Cardiac septum (tissue), 1 donor: ENCODE measurements at regions of chr22 and their contacts with region 1.

Region 1: DNA sequence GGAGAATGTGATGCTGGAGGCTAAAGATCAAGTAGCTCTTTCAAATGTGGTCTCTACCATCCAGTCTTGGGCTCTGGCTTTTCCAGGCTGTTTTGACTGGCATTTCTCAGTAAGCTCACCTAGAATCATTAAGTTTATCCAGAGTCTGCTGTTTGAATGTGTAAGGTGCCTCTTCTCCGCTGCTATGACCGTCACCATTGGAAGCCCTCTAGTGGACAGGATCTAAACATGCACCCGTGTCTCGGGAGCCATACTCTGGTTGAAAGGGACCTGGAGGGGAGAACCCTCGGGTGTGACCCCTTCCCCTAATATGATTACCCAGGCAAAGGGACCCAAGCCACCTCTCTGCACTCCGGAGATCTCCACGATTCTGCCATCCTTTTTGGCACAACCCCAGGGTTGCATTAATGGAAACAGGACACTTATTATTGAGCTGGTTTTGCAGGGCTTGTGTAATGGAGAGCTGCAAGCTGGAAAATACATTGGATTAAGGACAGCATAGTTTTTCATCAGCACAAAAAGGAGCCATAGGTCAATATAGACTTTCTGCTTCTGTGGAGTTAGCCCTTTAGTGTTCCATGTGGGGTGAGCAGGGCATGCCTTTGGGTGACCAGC is 191.0 kb upstream of the LARGE1 start:
- DNase-seq: no peak

Region 2: DNA sequence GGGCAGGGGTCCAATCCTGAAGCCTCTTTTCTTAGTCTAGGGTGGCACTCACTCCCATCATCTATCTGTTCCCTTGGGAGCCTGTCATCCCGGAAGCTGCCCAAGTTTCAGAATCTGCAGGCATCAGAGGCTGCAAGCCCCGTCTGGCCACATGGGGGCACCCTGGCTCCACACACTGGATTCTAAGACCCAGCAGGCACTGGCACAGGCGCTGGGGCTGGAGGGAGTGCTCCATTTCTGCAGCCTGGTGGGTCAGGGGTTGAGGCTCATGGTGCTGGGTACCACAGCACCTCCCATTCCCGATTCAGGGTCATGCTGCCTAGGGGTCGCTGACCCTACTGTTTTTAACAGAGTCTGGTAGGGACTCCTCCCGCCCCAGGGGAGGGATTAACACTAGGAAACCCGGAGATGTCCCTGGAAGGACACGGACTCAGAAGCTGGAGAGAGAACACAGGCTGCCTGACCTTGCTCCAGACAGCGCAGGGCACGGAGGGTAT is 809.2 kb before region 1 on chr22:
- intact Hi-C with region 1: loop called (anchors 5 kb)
- DNase-seq: peak; percentile 88

Region 3: GRCh38 chr22:33710326-33710725 is 401.0 kb before region 1 on chr22:
- intact Hi-C with region 1: no loop called
- DNase-seq: no peak

Region 4: DNA sequence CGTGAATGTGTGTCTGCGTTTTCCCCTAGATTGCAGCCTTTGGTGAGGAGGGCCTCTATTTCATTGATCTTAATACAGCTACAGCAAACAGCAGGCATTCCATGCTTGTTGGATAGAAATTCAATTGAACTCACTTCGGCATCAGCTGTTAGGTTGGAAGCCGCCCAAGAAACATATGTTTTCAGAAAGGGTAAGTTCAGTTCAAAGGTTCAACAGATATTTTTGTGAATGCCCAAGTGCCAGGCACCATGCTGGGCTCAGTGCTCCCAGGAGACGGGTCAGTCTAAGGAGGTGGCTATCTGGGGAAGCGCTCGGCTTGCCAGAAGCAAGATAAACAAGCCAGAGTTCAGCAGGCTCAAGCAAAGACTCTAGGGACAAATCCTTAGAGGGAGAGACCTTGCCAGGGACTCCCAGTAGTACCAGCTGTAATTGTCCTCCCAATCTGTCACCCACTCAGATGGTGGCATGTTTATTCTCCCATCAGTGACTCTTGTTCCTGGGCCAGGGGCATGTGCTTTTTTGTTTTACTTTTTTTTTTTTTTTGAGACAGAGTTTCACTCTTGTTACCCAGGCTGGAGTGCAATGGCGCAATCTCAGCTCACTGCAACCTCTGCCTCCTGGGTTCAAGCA is 126.5 kb before region 1 on chr22:
- intact Hi-C with region 1: no loop called
- DNase-seq: no peak